ENCODE measurements at regions of chr22 and their contacts with region 1.

Region 1: DNA sequence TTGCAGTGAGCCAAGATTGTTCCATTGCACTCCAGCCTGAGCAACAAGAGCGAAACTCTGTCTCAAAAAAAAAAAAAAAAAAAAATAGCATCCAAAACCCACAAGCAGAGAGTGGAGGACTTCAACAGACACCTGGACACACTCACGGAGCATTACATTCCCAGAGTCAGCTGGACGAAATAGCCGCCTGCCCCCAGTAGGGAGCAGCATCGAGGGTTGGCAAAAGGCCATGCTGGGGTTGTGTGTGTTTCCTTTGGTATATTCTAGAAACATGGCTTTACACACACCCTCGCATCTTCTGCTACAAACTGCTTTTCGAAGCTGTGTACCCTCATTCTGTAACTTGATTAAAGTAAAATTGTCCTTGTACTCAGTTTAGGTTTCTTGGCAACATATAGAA is 5.3 kb downstream of the ADA2 start:
- DNase-seq: no peak
- ATAC-seq: no peak
- H3K4me3 Mint-ChIP-seq: no peak overlapping the region
- H3K27ac Mint-ChIP-seq: peak overlapping the region; percentile 98
- H3K4me1 Mint-ChIP-seq: peaks cover 53% of the 10 kb centered on the region
- H3K27me3 Mint-ChIP-seq: no peaks in the 10 kb centered on the region
- CTCF ChIP-seq: no peak

Region 2: DNA sequence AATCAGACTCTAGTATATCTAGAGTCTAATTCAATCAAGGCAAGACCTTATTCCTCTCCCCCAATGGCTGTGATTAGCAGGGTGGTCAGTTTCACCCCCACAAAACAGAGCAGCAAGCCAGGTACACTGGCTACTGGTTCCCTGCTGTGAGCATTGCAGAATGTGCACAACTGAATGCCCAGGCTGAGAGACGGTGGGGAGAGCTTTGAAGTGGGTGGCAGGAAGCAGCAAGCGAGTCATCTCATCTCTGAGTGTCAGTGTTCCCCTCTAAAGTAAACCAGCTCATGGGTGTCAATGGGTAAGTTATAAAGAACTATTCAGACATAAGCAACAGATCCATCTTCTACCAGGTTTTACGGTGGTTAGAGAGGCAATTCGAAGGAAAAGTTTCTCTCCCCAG is 243.5 kb before region 1 on chr22:
- CTCF ChIA-PET with region 1: no interaction called
- POLR2A ChIA-PET with region 1: no interaction called
- intact Hi-C with region 1: no loop called
- DNase-seq: no peak
- ATAC-seq: no peak
- H3K4me3 Mint-ChIP-seq: no peak overlapping the region
- H3K27ac Mint-ChIP-seq: no peak overlapping the region
- H3K4me1 Mint-ChIP-seq: no peaks in the 10 kb centered on the region
- H3K27me3 Mint-ChIP-seq: peaks cover 18% of the 10 kb centered on the region
- CTCF ChIP-seq: no peak

Region 3: GRCh38 chr22:17084554-17085276 is 129.3 kb before region 1 on chr22 and contains the start of gene IL17RA:
- CTCF ChIA-PET with region 1: no interaction called
- POLR2A ChIA-PET with region 1: no interaction called
- intact Hi-C with region 1: loop called (anchors 5 kb)
- DNase-seq: peak; percentile 96
- ATAC-seq: peak; percentile 99
- H3K4me3 Mint-ChIP-seq: peak within 1 kb of the TSS; percentile 89
- H3K27ac Mint-ChIP-seq: peak within 1 kb of the TSS; percentile 81
- H3K4me1 Mint-ChIP-seq: peaks cover 40% of the 10 kb centered on the region
- H3K27me3 Mint-ChIP-seq: no peaks in the 10 kb centered on the region
- CTCF ChIP-seq: no peak
- total RNA-seq, gene IL17RA: 15.7 and 18.1 TPM in 2 replicates

Region 4: GRCh38 chr22:17171313-17172171 is 42.4 kb before region 1 on chr22:
- CTCF ChIA-PET with region 1: interaction called, 8 read pairs
- POLR2A ChIA-PET with region 1: interaction called, 4 read pairs
- intact Hi-C with region 1: loop called (anchors 5 kb)
- DNase-seq: peak; percentile 86
- ATAC-seq: peak; percentile 91
- H3K4me3 Mint-ChIP-seq: peak overlapping the region; percentile 77
- H3K27ac Mint-ChIP-seq: no peak overlapping the region
- H3K4me1 Mint-ChIP-seq: peaks cover 8% of the 10 kb centered on the region
- H3K27me3 Mint-ChIP-seq: peaks cover 2% of the 10 kb centered on the region
- CTCF ChIP-seq: peak; percentile 64

Region 5: GRCh38 chr22:17237038-17237668 is 23.2 kb after region 1 on chr22:
- CTCF ChIA-PET with region 1: no interaction called
- POLR2A ChIA-PET with region 1: interaction called, 22 read pairs
- intact Hi-C with region 1: loop called (anchors 1 kb)
- DNase-seq: no peak
- ATAC-seq: peak; percentile 93
- H3K4me3 Mint-ChIP-seq: peak overlapping the region; percentile 84
- H3K27ac Mint-ChIP-seq: peak overlapping the region; percentile 88
- H3K4me1 Mint-ChIP-seq: peaks cover 21% of the 10 kb centered on the region
- H3K27me3 Mint-ChIP-seq: no peaks in the 10 kb centered on the region
- CTCF ChIP-seq: no peak

Region 6: GRCh38 chr22:17250380-17251090 is 36.6 kb after region 1 on chr22:
- CTCF ChIA-PET with region 1: no interaction called
- POLR2A ChIA-PET with region 1: interaction called, 15 read pairs
- intact Hi-C with region 1: no loop called
- DNase-seq: no peak
- ATAC-seq: no peak
- H3K4me3 Mint-ChIP-seq: no peak overlapping the region
- H3K27ac Mint-ChIP-seq: no peak overlapping the region
- H3K4me1 Mint-ChIP-seq: no peaks in the 10 kb centered on the region
- H3K27me3 Mint-ChIP-seq: no peaks in the 10 kb centered on the region
- CTCF ChIP-seq: no peak

Region 7: DNA sequence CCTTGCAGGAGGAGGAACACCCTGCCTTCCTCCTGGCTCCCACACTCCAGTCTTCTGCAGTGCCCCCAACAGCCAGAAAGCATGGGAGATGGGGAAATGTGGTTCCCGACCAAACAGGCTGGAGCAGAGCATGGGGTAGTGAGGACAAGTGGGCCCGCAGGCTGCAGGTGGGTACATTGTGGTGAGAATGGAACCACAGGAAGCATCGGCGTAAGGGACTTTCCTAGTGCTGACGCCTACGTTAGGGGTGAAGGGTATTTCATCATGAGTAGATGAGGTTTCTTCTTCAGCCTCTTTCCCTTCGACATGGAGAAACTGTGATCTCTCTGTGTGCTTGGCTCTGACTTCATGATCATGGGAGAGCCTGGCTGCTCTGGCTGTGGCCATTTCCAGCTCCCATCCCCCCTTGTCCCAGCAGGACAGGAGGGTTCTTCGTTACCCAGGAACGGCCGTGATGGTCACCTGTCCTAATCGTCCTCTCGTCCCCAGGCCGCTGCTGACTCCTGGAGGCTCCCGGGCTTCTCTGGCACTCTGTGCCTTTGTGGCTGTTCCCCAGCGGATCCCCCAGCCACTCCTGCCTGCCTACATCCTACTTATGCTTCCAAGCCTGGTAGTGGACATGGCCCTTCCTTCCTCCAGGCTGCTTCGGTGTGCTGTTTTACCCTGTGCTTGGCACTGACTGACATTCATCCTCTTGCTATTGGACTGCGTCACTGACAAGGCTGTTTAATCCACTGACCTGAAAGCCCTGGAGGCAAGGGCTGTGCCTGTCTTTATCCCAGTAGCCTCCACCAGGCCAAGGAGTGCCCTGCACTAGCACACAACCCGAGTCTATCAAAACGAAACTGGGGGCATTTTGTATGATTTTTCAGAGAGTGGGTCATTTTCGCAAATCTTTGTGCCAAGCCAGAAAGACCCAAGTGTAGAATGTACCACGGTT is 90.1 kb after region 1 on chr22:
- CTCF ChIA-PET with region 1: interaction called, 3 read pairs
- POLR2A ChIA-PET with region 1: interaction called, 10 read pairs
- intact Hi-C with region 1: loop called (anchors 2 kb)
- DNase-seq: peak; percentile 37
- ATAC-seq: peak; percentile 96
- H3K4me3 Mint-ChIP-seq: peak overlapping the region; percentile 59
- H3K27ac Mint-ChIP-seq: peak overlapping the region; percentile 91
- H3K4me1 Mint-ChIP-seq: peaks cover 40% of the 10 kb centered on the region
- H3K27me3 Mint-ChIP-seq: no peaks in the 10 kb centered on the region
- CTCF ChIP-seq: no peak

Region 8: DNA sequence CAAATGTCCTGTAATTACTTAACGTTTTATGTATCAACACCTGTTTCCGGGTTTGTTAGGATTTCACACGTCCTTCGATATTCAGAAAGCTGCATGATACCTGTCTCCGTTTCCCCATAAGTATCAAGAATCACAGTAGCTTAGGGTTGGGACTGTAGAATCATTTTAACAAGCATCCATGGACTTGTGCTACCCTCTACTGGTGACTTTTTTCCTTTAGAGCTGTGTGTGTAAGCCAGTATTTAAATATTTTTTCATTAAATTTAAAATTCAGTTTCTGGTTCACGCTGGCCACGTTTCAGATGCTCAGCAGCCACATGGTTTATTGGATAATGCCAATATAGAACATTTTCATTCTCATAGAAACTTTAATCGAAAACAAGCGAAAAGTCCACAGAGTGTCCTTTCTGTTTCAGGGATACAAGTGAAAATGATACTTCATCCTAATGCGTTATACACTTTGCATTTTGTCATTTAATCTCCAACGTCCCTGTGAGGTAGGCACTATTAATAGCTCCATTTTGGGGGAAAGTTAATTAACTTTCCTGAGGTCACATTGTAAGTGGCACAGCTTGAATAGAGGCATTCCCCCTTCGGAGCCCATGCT is 287.8 kb after region 1 on chr22:
- CTCF ChIA-PET with region 1: interaction called, 38 read pairs
- POLR2A ChIA-PET with region 1: interaction called, 7 read pairs
- intact Hi-C with region 1: loop called (anchors 2 kb)
- DNase-seq: no peak
- ATAC-seq: peak; percentile 88
- H3K4me3 Mint-ChIP-seq: no peak overlapping the region
- H3K27ac Mint-ChIP-seq: no peak overlapping the region
- H3K4me1 Mint-ChIP-seq: peaks cover 6% of the 10 kb centered on the region
- H3K27me3 Mint-ChIP-seq: no peaks in the 10 kb centered on the region
- CTCF ChIP-seq: peak; percentile 43

Measured in activated B cell treated with CpG ODN at 0.5 μM for 24 hours (primary cell).